ENCODE measurements at regions of chr12 and their contacts with region 1.

Region 1: DNA sequence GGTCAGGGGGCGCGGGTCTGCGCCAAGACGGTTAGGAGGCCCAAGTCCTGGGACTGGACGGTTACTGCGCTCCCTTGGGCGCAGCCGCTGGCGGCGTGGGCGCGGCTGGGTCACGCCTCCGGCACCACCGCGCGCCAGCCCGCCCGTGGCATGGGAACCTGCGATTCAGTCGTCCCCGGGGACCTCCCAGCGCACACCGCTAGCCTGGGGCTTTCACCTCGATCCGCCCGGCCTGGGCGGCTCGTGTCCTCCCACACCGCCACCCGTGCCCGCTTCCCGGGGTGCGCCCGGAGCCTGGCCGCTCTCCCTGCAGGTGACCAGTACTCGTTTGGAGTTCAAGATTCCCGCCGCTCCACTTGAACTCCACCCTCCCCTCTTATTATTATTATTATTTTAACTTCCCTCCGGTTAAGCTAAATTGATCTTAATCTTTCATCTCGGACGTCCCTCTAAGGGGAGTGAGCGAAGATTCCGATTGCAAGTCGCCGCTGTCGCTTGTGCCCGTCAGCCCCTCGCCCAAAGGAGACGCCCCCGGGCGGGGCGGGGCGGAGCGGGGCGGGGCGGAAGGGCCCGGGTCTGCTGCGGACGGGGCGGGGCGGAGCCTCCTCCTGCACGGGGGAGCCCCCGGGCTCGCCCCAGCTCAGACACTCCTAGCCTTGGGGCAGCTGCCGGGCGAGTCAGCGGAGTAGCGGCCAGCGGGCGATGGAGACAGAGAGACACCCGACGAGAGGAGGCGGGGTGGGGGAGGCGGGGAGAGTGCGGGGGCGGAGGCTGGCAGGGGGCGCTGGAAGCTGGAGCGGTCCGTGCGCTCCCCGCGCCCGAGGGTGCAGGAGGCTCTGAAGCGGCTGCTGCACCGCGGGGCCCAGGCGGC is at the start of gene KCNMB4:
- DNase-seq: peak; percentile 58 to 83 (median 75)
- ATAC-seq: peak; percentile 87
- H3K4me3 ChIP-seq: peak within 1 kb of the TSS; percentile 48
- H3K27ac ChIP-seq: no peak within 1 kb of the TSS
- H3K4me1 ChIP-seq: peaks cover 7 to 23% of the 10 kb centered on the region in 2 experiments; a peak in 4 of 5 replicates
- H3K27me3 ChIP-seq: peaks cover 8 to 20% of the 10 kb centered on the region in 2 experiments
- CTCF ChIP-seq: no peak
- EP300 ChIP-seq: no peak
- POLR2A ChIP-seq: no peak
- RAD21 ChIP-seq: no peak
- polyA plus RNA-seq, gene KCNMB4: 0.01 TPM

Region 2: DNA sequence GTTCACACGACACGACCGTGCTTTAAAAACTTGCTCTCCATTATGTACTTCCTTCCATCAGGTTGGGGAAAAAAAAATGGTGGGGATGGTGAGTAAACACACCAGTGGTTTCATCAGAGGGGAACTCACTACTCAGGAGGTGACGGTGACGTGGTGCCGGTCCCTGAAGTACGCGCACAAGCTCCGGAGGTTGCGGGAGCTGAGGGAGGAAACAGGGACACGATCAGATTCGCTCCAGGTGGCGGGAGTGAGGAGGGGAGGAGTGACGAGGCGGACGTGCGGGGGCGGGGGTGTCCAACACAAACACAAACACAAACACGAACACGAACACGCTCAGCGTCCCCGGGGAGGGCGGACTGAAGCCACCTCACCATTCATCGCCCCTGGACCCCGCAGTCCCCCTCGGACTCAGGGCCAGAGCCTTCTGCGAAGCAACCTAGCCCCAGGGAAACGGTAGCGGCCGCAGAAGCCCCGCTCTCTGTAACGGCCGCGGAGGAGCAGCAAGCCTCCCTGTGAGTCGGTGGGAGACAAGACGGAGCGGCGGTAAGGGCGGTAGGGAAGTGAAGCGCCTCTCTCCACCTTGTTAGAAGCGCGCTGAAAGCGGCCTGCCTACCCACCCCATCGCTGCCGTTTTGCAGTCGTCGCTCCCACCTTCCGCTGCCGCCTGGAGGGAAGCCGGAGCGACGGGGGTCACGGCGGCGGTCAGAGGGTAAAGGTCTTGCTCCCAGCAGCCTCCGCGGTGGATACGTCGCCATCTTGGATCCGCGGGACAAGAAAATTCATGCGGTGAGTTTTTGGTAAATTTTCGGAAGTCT is 123.0 kb before region 1 on chr12 and contains the start of gene CNOT2:
- CTCF ChIA-PET with region 1: no interaction called
- POLR2A ChIA-PET with region 1: interaction called, 4 read pairs
- in situ Hi-C with region 1: no loop called
- intact Hi-C with region 1: loop called (anchors 10 kb)
- DNase-seq: peak; percentile 75 to 95 (median 80)
- ATAC-seq: peak; percentile 87
- H3K4me3 ChIP-seq: peak within 1 kb of the TSS; percentile 87
- H3K27ac ChIP-seq: peak within 1 kb of the TSS; percentile 100
- H3K4me1 ChIP-seq: peaks cover 6 to 18% of the 10 kb centered on the region in 2 experiments; a peak in 4 of 5 replicates
- H3K27me3 ChIP-seq: no peaks in the 10 kb centered on the region
- CTCF ChIP-seq: no peak
- EP300 ChIP-seq: 0 out of 2 replicates have a peak, but pooled peaks have one; percentile 40
- POLR2A ChIP-seq: peak; percentile 96
- RAD21 ChIP-seq: peak in 1 of 2 experiments; percentile 13; a peak in 1 of 4 replicates
- polyA plus RNA-seq, gene CNOT2: 43.6 to 84.4 TPM